ENCODE measurements at regions of chr15 and their contacts with region 1.

Region 1: DNA sequence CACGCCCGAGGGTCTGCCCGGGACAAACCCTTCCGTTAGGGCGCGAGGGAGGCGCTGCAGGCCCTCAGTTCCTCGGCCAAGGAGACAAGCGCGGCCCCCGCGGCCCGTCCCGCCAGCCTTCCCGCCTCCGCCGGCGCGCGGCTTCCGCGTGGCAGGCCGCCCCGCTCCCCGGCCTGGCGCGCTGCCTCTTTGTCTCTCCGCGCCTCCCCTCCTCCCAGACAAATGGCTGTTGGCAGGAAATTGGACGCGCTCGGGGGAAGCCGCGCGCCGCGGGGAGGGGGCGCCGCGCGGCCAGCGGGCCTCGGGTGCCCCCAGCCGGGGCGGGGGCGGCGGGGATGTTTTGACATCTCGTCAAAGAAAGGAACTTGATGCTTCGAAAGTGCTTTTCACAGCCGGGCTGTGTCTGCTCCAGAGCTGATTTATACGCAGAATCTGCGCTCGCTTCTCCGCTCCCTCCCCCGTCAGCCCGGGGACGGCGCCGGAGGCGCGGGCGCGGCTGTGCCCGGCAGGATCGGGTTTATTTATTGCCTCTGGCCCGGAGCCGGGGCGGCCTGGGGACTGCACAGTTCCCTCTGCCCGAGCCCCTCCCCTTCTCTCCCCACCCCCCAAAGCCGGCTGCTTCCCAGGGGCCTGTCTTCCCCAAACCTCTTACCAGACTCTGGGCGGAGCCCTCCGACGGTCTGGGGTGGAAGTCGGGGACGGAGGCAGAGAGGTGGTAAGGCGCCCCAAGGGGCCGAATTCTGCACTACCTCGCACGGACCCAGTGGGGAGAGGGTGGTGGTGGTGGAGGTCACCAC is 20.7 kb downstream of the SHF start:
- DNase-seq: peak; percentile 75
- ATAC-seq: peak; percentile 85
- H3K4me3 ChIP-seq: peak overlapping the region; percentile 59
- H3K27ac ChIP-seq: peak overlapping the region; percentile 91
- H3K4me1 ChIP-seq: peaks cover 8% of the 10 kb centered on the region
- H3K27me3 ChIP-seq: no peaks in the 10 kb centered on the region
- CTCF ChIP-seq: peak; percentile 65
- POLR2A ChIP-seq: peak; percentile 46; the same call in 1 of the 2 replicates
- RAD21 ChIP-seq: peak; percentile 39

Region 2: GRCh38 chr15:45198337-45199135 is 31.5 kb after region 1 on chr15:
- CTCF ChIA-PET with region 1: interaction called, 11 read pairs
- POLR2A ChIA-PET with region 1: no interaction called
- dilution Hi-C with region 1: no loop called
- in situ Hi-C with region 1: no loop called
- intact Hi-C with region 1: loop called (anchors 1 kb)
- DNase-seq: peak; percentile 96
- ATAC-seq: peak; percentile 69
- H3K4me3 ChIP-seq: peak overlapping the region; percentile 70
- H3K27ac ChIP-seq: peak overlapping the region; percentile 73
- H3K4me1 ChIP-seq: peaks cover 2% of the 10 kb centered on the region; the same call in 1 of the 2 replicates
- H3K27me3 ChIP-seq: peaks cover 1% of the 10 kb centered on the region; the same call in 1 of the 2 replicates
- CTCF ChIP-seq: peak; percentile 69
- POLR2A ChIP-seq: peak; percentile 83
- RAD21 ChIP-seq: peak; percentile 44

Measured in IMR-90 (cell line).